Activated B cell treated with CpG ODN at 0.5 μM for 24 hours (primary cell): ENCODE measurements at regions of chr7 and their contacts with region 1.

Region 1: DNA sequence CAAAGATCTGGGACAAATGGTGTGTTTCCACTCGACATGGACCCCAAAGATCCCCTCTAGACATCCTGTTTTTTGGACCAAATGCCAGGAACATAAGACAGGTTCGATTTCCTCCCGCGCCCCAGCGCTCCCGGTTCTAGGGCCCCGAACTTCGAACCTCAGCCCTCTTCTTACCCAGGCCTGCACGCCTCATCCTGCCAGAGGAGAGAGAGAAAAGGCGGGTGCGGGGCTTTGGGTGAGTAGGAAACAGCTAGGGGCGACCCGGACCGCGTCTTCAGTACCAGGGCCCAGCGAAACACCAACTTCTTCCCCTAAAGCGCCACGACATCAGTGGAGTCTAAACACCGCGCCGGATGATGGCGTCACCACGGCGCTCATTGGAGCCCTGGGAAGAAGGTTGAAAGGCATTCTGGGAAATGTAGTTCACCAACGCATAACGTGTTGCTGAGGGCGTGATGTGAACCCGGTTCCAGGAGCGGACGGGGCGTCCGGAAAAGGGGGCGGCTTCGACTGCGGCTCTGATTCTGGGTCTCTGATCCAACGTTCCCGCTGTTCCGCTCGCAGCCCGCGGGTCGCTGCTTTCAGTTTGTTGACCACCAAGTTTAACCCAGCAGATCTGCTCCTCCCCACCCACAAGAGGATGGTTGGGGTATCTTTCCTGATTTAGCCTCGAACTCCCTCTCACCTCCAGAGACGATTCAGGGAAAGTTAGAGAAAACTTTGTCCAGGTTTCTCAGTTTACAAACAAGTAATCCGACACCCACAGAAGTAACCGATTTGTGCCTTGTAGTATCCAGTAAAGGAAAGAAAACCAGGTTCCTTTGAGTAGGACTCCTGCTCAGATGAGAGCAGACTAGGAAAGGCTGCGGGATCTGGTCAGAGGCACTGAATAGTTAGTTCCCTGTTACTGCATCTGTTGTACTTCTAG is at the start of gene BET1:
- DNase-seq: peak; percentile 89
- ATAC-seq: peak; percentile 96
- H3K4me3 Mint-ChIP-seq: peak within 1 kb of the TSS; percentile 100
- H3K27ac Mint-ChIP-seq: peak within 1 kb of the TSS; percentile 99
- H3K4me1 Mint-ChIP-seq: peaks cover 50% of the 10 kb centered on the region
- H3K27me3 Mint-ChIP-seq: peaks cover 4% of the 10 kb centered on the region
- CTCF ChIP-seq: no peak
- total RNA-seq, gene BET1: 23.0 and 23.7 TPM in 2 replicates

Region 2: GRCh38 chr7:93902777-93903423 is 101.4 kb before region 1 on chr7:
- CTCF ChIA-PET with region 1: interaction called, 3 read pairs
- POLR2A ChIA-PET with region 1: no interaction called
- intact Hi-C with region 1: loop called (anchors 2 kb)
- DNase-seq: no peak
- ATAC-seq: no peak
- H3K4me3 Mint-ChIP-seq: no peak overlapping the region
- H3K27ac Mint-ChIP-seq: no peak overlapping the region
- H3K4me1 Mint-ChIP-seq: no peaks in the 10 kb centered on the region
- H3K27me3 Mint-ChIP-seq: peaks cover 17% of the 10 kb centered on the region
- CTCF ChIP-seq: peak; percentile 74

Region 3: DNA sequence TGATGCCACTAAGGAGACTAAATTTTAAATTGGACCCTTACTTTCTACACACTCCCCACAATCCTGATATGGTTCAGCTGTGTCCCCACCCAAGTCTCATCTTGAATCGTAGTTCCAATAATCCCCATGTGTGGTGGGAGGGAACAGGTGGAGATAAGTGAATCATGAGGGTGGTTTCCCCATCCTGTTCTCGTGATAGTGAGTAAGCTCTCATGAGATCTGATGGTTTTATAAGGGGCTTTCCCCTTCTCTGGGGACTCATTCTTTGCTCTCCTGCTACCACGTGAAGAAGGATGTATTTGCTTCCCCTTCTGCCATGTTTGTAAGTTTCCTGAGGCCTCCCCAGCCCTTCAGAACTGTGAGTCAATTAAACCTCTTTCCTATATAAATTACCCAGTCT is 18.3 kb after region 1 on chr7:
- CTCF ChIA-PET with region 1: no interaction called
- POLR2A ChIA-PET with region 1: interaction called, 3 read pairs
- intact Hi-C with region 1: loop called (anchors 1 kb)
- DNase-seq: no peak
- ATAC-seq: peak; percentile 84
- H3K4me3 Mint-ChIP-seq: peak overlapping the region; percentile 62
- H3K27ac Mint-ChIP-seq: peak overlapping the region; percentile 92
- H3K4me1 Mint-ChIP-seq: peaks cover 23% of the 10 kb centered on the region
- H3K27me3 Mint-ChIP-seq: no peaks in the 10 kb centered on the region
- CTCF ChIP-seq: no peak

Region 4: GRCh38 chr7:94060752-94061151 is 56.5 kb after region 1 on chr7:
- CTCF ChIA-PET with region 1: no interaction called
- POLR2A ChIA-PET with region 1: interaction called, 3 read pairs
- intact Hi-C with region 1: loop called (anchors 1 kb)
- DNase-seq: no peak
- ATAC-seq: no peak
- H3K4me3 Mint-ChIP-seq: no peak overlapping the region
- H3K27ac Mint-ChIP-seq: no peak overlapping the region
- H3K4me1 Mint-ChIP-seq: peaks cover 32% of the 10 kb centered on the region
- H3K27me3 Mint-ChIP-seq: no peaks in the 10 kb centered on the region
- CTCF ChIP-seq: no peak

Region 5: DNA sequence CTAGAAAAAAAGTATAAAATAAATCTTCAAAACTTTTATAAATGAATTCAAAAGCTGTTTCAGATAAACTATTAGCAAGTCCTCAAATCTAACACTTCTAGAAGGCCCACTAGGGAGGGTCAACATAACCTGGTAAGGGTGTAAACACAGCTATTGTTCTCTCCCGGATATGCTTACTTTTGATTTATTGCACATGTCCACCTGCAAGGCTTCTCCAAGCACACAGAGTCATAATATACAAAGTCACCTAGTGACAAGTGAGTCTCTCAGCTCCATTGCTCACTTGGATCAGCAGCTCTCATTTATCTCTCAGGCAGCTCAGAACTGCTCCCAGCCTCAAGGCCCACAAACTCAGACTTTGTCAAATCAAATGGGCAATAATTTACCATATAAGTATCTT is 346.4 kb after region 1 on chr7:
- CTCF ChIA-PET with region 1: no interaction called
- POLR2A ChIA-PET with region 1: no interaction called
- intact Hi-C with region 1: loop called (anchors 5 kb)
- DNase-seq: no peak
- ATAC-seq: no peak
- H3K4me3 Mint-ChIP-seq: no peak overlapping the region
- H3K27ac Mint-ChIP-seq: no peak overlapping the region
- H3K4me1 Mint-ChIP-seq: peaks cover 30% of the 10 kb centered on the region
- H3K27me3 Mint-ChIP-seq: peaks cover 13% of the 10 kb centered on the region
- CTCF ChIP-seq: no peak